Posterior vena cava (tissue), 2 donors: ENCODE measurements at regions of chr19 and their contacts with region 1.

Region 1: DNA sequence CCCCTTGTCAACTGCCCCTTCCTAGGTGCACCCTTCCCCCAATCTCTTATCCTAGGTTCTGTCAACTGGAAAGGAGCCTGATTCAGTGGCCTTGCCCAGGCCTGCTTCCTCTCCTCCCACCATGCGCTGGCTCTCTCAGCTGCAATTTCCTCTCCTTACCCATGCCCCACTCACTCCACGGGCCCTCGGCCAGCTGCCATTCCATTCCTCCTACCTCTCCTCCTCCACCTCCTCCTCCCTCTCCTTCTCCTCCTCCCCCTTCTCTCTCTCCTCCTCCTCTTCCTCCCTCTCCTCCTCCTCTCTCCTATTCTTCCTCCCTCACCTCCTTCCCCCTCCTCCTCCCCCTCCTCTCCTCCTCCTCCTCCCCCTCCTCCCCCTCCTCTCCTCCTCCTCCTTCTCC is 9.6 kb upstream of the TIMM44 start:
- DNase-seq: no peak

Region 2: DNA sequence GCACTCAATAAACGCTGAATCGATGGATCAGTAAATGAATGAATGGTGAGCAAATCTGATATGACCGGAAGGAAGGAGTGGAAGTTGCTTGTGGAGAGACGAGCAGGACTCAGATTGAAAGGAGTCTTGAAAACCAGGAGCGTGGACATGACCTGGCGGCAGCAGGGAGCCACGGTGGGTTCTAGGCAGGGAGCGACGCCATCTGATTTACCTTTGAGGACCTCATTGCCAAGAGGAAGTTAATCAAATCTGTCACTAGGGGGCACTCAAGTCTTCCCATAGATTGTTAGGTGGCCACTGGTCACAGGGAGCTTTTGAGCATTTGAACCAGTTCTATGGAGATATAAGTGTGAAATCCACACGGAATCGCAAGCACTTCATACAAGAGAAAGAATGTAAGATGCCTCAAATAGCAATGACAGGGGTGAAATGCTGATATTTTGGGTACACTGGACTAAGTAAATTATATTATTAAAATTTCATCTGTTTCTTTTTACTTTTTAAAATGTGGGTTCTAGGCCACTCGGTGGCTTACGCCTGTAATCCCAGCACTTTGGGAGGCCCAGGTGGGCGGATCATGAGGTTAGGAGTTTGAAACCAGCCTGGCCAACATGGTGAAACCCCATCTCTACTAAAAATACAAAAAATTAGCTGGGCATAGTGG is 205.5 kb after region 1 on chr19:
- intact Hi-C with region 1: loop called in 1 of 2 experiments (anchors 10 kb)
- DNase-seq: no peak